Activated B cell treated with CpG ODN at 0.5 μM for 24 hours (primary cell): ENCODE measurements at regions of chr1 and their contacts with region 1.

Region 1: DNA sequence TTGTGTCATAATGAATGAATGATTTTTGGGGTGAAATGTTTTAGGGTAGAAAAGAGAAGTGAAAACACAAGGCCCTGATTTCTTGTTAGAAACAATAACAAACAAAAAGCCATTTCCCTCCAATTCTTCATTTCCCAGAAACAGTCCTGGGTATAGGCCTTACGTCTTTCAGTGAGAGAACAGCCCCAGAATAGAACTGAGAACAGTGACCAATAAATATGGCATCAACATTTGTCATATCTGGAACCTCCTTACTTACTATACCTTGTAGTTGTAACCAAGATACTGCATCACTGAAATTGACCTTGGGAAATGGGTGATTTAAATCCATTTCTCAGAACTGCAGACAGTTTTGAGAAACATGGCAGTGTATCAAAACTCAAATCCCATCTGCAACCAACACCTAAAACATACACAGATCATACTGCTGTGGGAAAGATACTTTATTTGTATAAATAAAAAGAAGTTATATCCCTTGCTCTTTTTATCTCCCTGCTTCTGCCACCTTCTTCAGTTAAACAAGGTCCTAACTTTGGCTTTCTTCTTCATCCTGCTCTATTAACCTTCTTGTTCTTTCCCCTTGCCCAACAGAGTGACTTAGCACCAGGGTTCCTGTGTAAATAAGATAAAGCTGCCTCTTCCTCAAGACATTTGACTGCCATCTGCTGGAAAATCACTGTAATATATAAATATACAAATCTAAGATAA is 19.5 kb downstream of the XKR8 start:
- DNase-seq: no peak
- ATAC-seq: peak; percentile 68
- H3K4me3 Mint-ChIP-seq: no peak overlapping the region
- H3K27ac Mint-ChIP-seq: no peak overlapping the region
- H3K4me1 Mint-ChIP-seq: peaks cover 2% of the 10 kb centered on the region
- H3K27me3 Mint-ChIP-seq: no peaks in the 10 kb centered on the region
- CTCF ChIP-seq: peak; percentile 70

Region 2: GRCh38 chr1:27671964-27672749 is 307.1 kb before region 1 on chr1 and contains the start of gene IFI6:
- CTCF ChIA-PET with region 1: interaction called, 7 read pairs
- POLR2A ChIA-PET with region 1: no interaction called
- intact Hi-C with region 1: loop called (anchors 1 kb)
- DNase-seq: peak; percentile 63
- ATAC-seq: peak; percentile 90
- H3K4me3 Mint-ChIP-seq: peak within 1 kb of the TSS; percentile 97
- H3K27ac Mint-ChIP-seq: peak within 1 kb of the TSS; percentile 98
- H3K4me1 Mint-ChIP-seq: peaks cover 31% of the 10 kb centered on the region
- H3K27me3 Mint-ChIP-seq: no peaks in the 10 kb centered on the region
- CTCF ChIP-seq: no peak
- total RNA-seq, gene IFI6: 10.9 and 11.4 TPM in 2 replicates

Region 3: DNA sequence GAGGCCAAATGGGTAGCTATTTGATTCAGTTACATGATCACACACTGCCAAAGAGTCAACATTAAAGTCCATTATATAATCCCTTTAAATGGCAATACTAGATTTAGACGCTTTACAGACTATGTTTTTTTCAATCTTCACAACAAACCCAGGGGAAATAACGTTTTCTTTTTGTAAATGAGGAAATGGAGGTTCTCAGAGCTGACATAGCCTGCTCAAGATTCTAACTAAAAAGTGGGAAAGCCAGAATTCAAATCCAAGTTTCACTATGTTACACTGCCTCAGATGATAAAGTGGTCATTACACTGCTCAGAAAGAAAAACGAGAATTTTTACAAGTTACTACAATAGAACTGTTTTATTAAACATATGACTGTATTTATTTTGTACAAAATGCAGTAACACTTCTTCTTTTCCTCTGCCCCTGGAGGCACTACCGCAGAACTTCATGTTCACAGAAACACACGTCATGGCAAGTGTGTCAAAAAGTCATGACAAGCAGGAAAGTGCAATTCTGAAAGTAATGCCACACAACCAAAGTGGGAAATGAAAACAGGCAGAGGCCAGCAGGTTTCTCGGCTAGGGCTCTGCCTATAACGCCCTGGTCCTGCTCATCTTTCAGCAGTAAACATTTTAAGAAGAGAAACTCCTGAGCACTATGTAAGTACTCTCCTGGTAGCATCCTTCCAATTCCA is 88.0 kb before region 1 on chr1:
- CTCF ChIA-PET with region 1: interaction called, 5 read pairs
- POLR2A ChIA-PET with region 1: no interaction called
- intact Hi-C with region 1: loop called (anchors 1 kb)
- DNase-seq: no peak
- ATAC-seq: peak; percentile 76
- H3K4me3 Mint-ChIP-seq: peak overlapping the region; percentile 50
- H3K27ac Mint-ChIP-seq: peak overlapping the region; percentile 89
- H3K4me1 Mint-ChIP-seq: peaks cover 57% of the 10 kb centered on the region
- H3K27me3 Mint-ChIP-seq: no peaks in the 10 kb centered on the region
- CTCF ChIP-seq: no peak

Region 4: GRCh38 chr1:27940297-27940696 is 39.0 kb before region 1 on chr1:
- CTCF ChIA-PET with region 1: no interaction called
- POLR2A ChIA-PET with region 1: interaction called, 4 read pairs
- intact Hi-C with region 1: loop called (anchors 1 kb)
- DNase-seq: no peak
- ATAC-seq: peak; percentile 83
- H3K4me3 Mint-ChIP-seq: no peak overlapping the region
- H3K27ac Mint-ChIP-seq: no peak overlapping the region
- H3K4me1 Mint-ChIP-seq: peaks cover 6% of the 10 kb centered on the region
- H3K27me3 Mint-ChIP-seq: peaks cover 7% of the 10 kb centered on the region
- CTCF ChIP-seq: no peak

Region 5: GRCh38 chr1:27959400-27960217 is 19.7 kb before region 1 on chr1 and contains the start of gene XKR8:
- CTCF ChIA-PET with region 1: interaction called, 13 read pairs
- POLR2A ChIA-PET with region 1: no interaction called
- intact Hi-C with region 1: no loop called
- DNase-seq: peak; percentile 86
- ATAC-seq: peak; percentile 99
- H3K4me3 Mint-ChIP-seq: peak within 1 kb of the TSS; percentile 89
- H3K27ac Mint-ChIP-seq: peak within 1 kb of the TSS; percentile 83
- H3K4me1 Mint-ChIP-seq: peaks cover 20% of the 10 kb centered on the region
- H3K27me3 Mint-ChIP-seq: no peaks in the 10 kb centered on the region
- CTCF ChIP-seq: no peak
- total RNA-seq, gene XKR8: 5.1 and 6.1 TPM in 2 replicates